ENCODE measurements at regions of chr6 and their contacts with region 1.

Region 1: GRCh38 chr6:72622094-72622940 is 453 bp downstream of the KCNQ5 start:
- DNase-seq: peak; percentile 65
- H3K4me3 Mint-ChIP-seq: peak overlapping the region; percentile 87
- H3K27ac Mint-ChIP-seq: peak overlapping the region; percentile 87
- H3K4me1 Mint-ChIP-seq: peaks cover 61% of the 10 kb centered on the region
- H3K27me3 Mint-ChIP-seq: peaks cover 2% of the 10 kb centered on the region

Region 2: DNA sequence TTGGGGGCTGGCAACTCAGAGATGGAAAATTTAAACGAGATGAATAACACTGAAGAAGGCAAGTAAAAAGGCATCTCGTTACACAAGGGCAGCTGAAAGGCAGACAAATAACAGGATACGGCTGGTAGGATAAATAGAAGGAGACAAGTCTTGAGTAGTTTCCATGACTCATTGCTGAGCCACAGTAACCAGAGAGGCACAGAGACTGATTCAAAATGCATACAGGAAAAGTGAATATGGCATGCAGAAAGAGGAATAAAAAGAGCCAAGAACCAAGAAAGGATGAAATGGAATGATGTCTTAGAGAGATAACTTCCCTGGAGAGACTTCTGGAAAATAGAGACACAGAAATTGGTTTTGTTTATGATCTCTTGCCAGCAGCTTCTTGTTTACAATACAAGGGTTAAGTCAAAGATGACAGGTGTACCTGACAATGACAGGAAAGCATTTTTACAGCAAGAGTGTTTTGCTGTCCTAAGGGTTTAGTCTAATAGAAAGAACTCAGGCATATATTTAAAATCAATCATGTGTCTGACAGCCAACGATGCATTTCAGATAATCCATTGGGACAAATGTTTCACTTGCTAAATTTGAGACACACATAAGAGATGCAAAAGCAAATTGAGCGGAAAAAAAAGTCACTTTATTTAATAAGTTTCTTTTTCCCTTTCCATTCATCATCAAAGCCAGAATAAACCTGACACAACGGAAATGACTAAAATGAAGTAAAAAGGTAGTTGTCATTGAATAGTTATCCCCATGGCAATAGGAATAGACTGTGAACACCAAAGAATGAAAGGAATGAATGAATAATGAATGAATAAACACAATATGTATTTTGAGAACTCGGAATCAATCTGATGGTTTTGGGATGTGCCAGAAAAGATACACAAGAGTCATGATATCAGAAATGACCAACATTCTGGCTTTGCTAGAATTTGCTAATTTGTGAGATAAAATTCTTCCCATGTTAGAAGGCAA is 68.5 kb before region 1 on chr6:
- CTCF ChIA-PET with region 1: interaction called, 3 read pairs
- POLR2A ChIA-PET with region 1: interaction called, 3 read pairs
- intact Hi-C with region 1: loop called (anchors 5 kb)
- DNase-seq: no peak
- H3K4me3 Mint-ChIP-seq: no peak overlapping the region
- H3K27ac Mint-ChIP-seq: peak overlapping the region; percentile 18
- H3K4me1 Mint-ChIP-seq: peaks cover 11% of the 10 kb centered on the region
- H3K27me3 Mint-ChIP-seq: no peaks in the 10 kb centered on the region

Region 3: DNA sequence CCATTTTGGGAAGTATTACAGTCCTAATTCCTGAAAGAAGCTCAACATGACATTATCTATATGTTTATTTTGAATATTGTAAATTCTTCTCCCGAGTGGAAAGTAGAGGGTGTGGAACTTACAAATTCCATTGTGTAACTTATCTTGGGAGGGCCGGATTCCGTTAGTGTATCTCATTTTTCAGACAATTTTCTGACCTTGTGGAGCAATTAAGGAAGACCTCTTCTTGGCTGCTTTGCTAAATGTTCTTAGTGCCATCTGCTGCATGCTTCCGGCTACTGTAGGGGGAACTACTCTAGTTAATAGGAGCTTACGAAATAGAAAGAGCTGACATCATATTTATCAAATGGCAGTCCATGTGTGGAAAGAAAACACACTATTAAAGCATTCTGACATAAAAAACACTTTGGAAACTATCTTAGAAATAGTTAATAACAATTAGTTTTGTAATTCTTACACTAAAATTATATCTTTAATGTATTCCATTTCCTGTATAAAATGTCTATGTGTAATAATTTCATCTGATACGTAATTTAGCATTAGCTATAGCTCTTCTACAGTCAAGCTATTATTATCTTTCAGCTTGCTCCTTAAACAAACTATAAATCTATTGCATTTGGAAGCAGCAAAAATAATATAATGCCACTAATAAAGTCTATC is 41.9 kb before region 1 on chr6:
- CTCF ChIA-PET with region 1: no interaction called
- POLR2A ChIA-PET with region 1: no interaction called
- intact Hi-C with region 1: no loop called
- DNase-seq: no peak
- H3K4me3 Mint-ChIP-seq: no peak overlapping the region
- H3K27ac Mint-ChIP-seq: no peak overlapping the region
- H3K4me1 Mint-ChIP-seq: peaks cover 3% of the 10 kb centered on the region
- H3K27me3 Mint-ChIP-seq: no peaks in the 10 kb centered on the region

Region 4: GRCh38 chr6:72657407-72658197 is 35.3 kb after region 1 on chr6:
- CTCF ChIA-PET with region 1: no interaction called
- POLR2A ChIA-PET with region 1: no interaction called
- intact Hi-C with region 1: no loop called
- DNase-seq: no peak
- H3K4me3 Mint-ChIP-seq: no peak overlapping the region
- H3K27ac Mint-ChIP-seq: no peak overlapping the region
- H3K4me1 Mint-ChIP-seq: peaks cover under 1% of the 10 kb centered on the region
- H3K27me3 Mint-ChIP-seq: no peaks in the 10 kb centered on the region

Region 5: GRCh38 chr6:72826037-72826436 is 203.7 kb after region 1 on chr6:
- CTCF ChIA-PET with region 1: interaction called, 3 read pairs
- POLR2A ChIA-PET with region 1: no interaction called
- intact Hi-C with region 1: loop called (anchors 1 kb)
- DNase-seq: no peak
- H3K4me3 Mint-ChIP-seq: no peak overlapping the region
- H3K27ac Mint-ChIP-seq: no peak overlapping the region
- H3K4me1 Mint-ChIP-seq: peaks cover 17% of the 10 kb centered on the region
- H3K27me3 Mint-ChIP-seq: no peaks in the 10 kb centered on the region

Region 6: DNA sequence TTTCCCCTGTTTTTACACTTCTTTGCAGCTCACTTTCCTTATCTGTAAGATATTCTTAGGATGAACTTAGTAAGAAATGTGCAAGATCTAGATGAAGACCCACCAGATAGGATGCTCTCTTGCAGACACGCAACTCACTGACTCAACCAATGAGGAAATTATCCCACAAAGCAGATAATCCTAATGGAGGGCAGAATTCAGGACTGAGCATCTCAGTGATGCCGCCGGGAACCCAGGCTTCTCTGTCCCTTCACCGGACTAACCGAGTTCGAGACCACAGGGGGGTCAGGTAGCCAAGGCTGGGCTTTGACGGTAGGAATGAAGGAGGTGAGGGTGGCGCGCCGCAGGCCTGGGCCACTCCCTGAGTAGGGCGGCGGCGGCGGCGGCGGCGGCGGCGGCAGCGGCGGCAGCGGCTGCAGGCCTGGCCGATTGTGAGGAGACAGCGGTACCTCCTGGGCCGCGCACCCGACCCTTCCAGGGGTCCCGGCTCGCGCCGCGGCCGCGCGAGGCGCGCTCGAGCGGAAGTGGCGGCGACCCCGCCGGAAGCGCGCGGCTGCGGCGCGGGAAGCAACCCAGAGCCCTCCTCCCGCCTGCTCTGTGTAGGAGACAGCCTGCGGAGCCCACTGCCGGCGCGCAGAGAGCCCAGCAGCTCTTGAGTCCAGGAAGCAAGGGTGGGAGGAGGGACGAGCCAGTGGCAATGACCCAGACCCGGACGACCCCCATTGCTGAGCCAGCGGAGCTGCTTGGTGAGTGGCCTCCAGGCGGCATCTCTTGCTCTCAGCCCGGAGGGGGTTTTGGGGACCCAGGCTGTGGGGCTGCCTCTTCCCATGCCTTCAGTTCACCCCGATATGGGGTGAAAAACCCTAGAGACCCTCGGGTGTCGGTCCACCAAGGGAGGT is 640.6 kb after region 1 on chr6 and contains the start of gene KHDC1:
- CTCF ChIA-PET with region 1: no interaction called
- POLR2A ChIA-PET with region 1: no interaction called
- intact Hi-C with region 1: loop called (anchors 2 kb)
- DNase-seq: peak; percentile 71
- H3K4me3 Mint-ChIP-seq: peak within 1 kb of the TSS; percentile 73
- H3K27ac Mint-ChIP-seq: peak within 1 kb of the TSS; percentile 34
- H3K4me1 Mint-ChIP-seq: peaks cover 25% of the 10 kb centered on the region
- H3K27me3 Mint-ChIP-seq: no peaks in the 10 kb centered on the region
- total RNA-seq, gene KHDC1: 4.0 to 4.6 TPM

Region 7: DNA sequence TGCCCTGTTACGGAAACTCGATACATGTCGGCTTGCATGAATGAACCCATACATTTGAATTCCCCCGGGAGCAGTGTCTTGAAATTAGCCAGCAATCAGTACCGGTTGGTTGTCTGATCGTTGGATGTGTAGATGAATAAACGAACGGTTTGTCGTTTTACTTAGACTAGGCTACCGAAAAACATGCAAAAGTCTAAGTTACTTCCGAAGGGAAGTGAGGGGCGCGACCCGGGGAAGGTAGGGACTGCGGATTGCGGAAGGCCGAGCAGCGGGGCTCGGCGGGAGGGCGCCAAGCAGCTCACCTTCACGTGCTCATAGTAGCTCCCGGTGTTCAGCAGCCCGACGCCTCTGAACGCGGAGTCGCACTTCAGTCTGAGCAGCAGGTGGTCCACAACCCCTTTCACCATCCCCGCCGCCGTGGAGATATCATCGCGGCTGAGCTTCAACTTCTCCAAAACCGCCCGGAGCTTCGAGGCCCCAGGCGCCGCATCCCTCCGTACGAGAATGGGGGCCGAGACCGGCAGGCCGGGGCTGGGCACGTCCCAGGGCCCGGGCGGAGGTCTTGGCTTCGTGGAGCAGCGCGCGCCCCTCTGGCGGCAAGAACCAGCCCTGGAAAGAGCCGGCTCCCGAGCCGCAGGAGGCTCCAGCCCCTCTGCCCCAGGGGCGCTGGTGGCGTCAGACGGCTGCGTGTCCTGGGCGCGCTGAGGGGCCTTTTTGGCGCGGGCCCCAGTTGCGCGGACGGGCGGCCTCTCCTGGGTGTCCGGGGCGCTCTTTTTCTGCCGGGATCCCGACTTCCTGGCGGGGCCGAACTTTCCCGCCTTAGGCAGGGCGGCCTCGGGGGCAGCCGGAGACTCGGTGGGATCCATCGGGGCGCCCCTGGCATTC is 829.1 kb after region 1 on chr6:
- CTCF ChIA-PET with region 1: no interaction called
- POLR2A ChIA-PET with region 1: interaction called, 4 read pairs
- intact Hi-C with region 1: loop called (anchors 1 kb)
- DNase-seq: peak; percentile 61
- H3K4me3 Mint-ChIP-seq: peak overlapping the region; percentile 86
- H3K27ac Mint-ChIP-seq: peak overlapping the region; percentile 93
- H3K4me1 Mint-ChIP-seq: peaks cover 18% of the 10 kb centered on the region
- H3K27me3 Mint-ChIP-seq: no peaks in the 10 kb centered on the region

Region 8: DNA sequence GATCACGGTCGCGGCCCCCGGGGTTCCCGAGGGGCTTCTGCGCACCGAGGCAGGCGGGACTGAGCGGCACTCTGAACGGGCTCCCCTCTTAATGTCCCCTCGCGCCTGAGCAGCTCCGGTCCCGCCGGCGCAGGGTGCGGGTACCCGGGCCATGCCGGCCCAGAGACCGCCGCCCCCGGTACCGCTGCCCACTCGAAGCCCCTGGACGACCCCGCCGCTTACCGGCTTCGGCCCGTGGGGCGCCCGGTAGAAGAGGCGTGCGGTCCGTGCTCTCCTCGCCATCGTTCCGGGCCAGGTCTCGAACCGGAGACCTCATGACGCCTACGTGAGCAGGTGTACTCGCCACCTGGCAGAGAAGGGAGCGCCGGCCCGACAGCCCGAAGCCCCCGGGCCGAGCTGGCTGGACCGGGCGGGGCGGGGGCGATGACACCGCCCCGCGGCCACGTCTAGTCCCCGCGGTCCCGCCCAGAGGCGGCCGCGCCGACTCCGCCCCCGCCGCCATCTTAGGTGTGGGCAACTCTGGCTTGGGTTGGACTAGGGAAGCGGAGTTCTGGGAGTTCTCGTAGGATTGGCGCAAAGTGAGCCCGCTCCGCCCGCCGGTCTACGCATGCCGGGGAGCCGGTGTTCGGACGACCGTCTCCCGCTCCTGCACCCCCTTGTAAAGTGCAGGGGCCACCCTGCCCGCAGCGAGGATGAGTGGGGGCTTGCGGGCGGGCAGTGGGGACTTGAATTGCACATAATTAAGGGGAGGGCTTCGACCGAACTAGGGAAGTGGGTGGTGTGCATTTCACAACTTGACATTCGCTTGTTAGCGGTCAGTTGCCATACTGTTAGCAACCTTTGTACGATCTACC is 1031.5 kb after region 1 on chr6 and contains the start of gene SLC17A5:
- CTCF ChIA-PET with region 1: no interaction called
- POLR2A ChIA-PET with region 1: no interaction called
- intact Hi-C with region 1: loop called (anchors 1 kb)
- DNase-seq: peak; percentile 94
- H3K4me3 Mint-ChIP-seq: peak within 1 kb of the TSS; percentile 97
- H3K27ac Mint-ChIP-seq: peak within 1 kb of the TSS; percentile 95
- H3K4me1 Mint-ChIP-seq: peaks cover 23% of the 10 kb centered on the region
- H3K27me3 Mint-ChIP-seq: no peaks in the 10 kb centered on the region
- total RNA-seq, gene SLC17A5: 5.1 to 5.4 TPM